Psoas muscle (tissue), 8 donors: ENCODE measurements at regions of chr7 and their contacts with region 1.

Region 1: GRCh38 chr7:82044497-82045080 is 274.7 kb upstream of the HGF start:
- DNase-seq: no peak
- ATAC-seq: peak in 3 of 4 donors; percentile 43 to 87 (median 66)
- H3K4me3 ChIP-seq: no peak overlapping the region
- H3K27ac ChIP-seq: no peak overlapping the region
- H3K4me1 ChIP-seq: no peaks in the 10 kb centered on the region
- H3K27me3 ChIP-seq: no peaks in the 10 kb centered on the region
- CTCF ChIP-seq: peak; percentile 83

Region 2: DNA sequence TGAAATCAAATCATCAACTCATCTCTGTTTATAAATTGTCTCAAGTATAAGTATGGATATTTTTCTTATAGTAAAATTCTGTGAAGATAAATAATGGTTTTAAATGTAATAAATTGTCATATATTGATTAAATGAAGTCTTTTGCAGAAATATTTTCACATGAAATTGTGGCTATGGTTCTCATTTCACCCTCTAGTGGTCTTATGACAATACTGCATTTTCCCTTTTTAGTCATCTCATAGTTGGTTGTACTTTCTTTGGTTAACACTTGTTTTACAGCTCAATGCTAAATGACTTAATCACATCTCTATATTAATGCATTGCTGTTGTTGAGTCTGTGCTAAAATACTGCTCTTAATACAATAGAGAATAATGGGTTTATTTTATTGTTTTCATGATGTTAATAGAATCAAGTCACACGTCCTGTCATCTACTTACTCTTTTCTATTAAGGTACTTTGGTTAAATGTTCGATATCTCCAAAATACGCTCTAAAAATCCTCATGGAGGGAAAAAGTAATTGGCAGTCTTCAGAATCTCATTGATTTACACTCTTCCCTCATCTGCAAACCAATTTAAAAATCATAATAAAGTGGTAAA is 437.0 kb after region 1 on chr7:
- intact Hi-C with region 1: loop called (anchors 10 kb)
- DNase-seq: no peak
- ATAC-seq: peak in 2 of 4 donors; percentile 58 to 71
- H3K4me3 ChIP-seq: no peak overlapping the region
- H3K27ac ChIP-seq: no peak overlapping the region
- H3K4me1 ChIP-seq: peaks cover 15% of the 10 kb centered on the region
- H3K27me3 ChIP-seq: no peaks in the 10 kb centered on the region
- CTCF ChIP-seq: peak; percentile 83